A549 (cell line): ENCODE measurements at regions of chr21 and their contacts with region 1.

Region 1: DNA sequence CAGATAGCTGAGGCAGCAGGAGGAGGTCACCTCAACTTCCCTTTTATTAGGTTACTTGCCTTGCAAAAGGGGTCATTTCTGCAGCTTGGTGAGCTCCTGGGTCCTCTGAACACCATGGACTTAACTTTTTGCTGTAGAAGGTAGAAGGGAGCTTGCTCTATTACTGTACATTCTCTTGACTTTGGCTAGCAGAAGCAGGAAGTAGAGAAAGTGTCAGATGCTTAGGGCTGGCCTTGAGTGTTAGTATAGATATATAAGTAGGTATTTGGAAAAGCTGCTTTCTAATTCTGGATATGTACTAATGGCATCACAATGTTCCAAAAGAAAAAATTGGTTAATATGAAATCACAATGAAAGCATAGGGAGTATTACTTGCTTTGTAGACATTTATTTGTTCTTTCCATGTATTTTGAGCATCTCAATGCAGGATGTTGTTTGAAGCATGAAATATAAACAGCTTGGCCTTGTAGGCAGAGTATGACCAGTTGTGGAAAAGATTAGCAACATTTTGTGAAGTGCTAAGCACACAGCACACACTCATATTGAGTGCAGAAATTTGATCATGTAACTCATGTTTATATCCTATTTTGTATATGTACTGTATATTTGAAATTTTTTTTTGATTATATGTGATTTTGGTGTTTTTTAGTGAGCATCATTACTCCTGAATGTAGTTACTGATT is 108.8 kb downstream of the DYRK1A start:
- DNase-seq: no peak
- ATAC-seq: no peak
- H3K4me3 ChIP-seq: no peak overlapping the region
- H3K27ac ChIP-seq: no peak overlapping the region
- H3K4me1 ChIP-seq: peaks cover 30% of the 10 kb centered on the region; the same call in 2 of the 3 replicates
- CTCF ChIP-seq: no peak
- EP300 ChIP-seq: no peak
- POLR2A ChIP-seq: no peak
- RAD21 ChIP-seq: no peak

Region 2: DNA sequence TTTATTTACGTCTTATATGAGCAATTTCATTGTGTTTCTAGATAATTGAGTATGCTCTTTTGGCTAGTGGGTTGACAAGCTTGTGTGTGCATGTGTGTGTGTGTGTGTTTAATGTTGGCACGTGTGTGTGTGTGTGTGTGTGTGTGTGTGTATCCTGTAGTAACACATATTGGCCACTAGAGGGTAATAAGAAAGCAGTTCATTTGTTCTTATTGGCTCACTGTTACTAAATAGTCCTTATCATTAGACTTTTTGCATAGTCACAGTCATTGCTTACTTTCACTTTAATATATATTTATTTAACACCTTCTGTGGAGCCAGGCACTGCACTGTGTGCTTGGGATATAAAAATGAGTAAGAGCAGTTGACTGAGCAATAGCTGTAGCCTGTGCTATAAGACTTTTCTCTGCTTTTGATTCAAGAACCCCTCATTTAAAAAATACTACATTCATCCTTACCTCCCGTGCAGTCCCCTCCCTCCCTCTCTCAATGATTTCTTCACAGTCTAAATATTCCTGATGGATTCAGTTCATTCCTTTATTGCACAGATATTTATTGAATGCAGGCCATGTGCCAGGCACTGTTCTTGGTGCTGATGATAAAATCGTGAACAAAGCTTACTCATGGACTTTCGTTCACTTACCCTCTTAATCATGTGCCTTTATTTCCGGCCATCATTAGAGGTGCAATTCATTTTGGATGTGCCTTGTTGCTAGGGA is 12.1 kb before region 1 on chr21:
- CTCF ChIA-PET with region 1: interaction called, 15 read pairs
- POLR2A ChIA-PET with region 1: no interaction called
- DNase-seq: peak; percentile 17 to 64
- ATAC-seq: peak; percentile 54 to 72; a peak in 4 of 6 replicates
- H3K4me3 ChIP-seq: no peak overlapping the region
- H3K27ac ChIP-seq: peak overlapping the region; percentile 46 to 56; a peak in 5 of 6 replicates
- H3K4me1 ChIP-seq: peaks cover 48% of the 10 kb centered on the region
- CTCF ChIP-seq: peak; percentile 44
- EP300 ChIP-seq: no peak
- POLR2A ChIP-seq: no peak
- RAD21 ChIP-seq: peak in 1 of 2 experiments; percentile 35; a peak in 4 of 5 replicates

Region 3: DNA sequence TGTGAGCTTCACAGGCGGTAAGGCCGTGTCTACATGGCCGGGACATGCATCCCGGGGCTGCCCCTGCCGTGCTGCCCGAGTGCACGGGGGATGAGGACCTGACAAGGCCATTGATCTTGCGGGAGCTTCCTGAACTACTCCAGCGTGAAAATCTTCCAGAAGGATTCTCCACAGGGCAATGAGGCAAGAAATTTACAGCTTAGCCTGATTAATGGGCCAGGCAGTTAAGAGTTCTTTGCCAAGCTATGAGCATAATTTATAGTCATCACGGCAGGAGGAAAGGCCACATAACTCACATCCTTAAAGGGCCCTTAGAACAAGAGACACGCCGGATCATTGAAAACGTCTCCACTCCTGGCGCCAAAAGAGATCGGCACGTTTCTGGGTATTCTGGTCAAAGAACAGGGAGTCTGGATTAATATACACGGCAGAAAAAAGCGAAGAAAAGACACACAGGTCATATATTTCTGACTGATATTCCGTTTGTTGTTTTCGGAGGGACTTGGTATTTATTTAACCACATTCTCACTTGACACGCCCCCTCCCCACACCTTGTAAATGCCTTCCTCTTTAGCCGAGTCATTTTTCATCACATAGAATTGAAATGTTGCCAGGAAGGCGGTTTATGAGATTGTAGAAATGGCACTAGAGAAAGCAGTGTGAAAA is 71.8 kb after region 1 on chr21:
- CTCF ChIA-PET with region 1: no interaction called
- POLR2A ChIA-PET with region 1: no interaction called
- DNase-seq: no peak
- ATAC-seq: no peak; a peak in 1 of 6 replicates
- H3K4me3 ChIP-seq: no peak overlapping the region
- H3K27ac ChIP-seq: no peak overlapping the region
- H3K4me1 ChIP-seq: peaks cover 6% of the 10 kb centered on the region
- CTCF ChIP-seq: no peak
- EP300 ChIP-seq: no peak
- POLR2A ChIP-seq: no peak
- RAD21 ChIP-seq: no peak

Region 4: DNA sequence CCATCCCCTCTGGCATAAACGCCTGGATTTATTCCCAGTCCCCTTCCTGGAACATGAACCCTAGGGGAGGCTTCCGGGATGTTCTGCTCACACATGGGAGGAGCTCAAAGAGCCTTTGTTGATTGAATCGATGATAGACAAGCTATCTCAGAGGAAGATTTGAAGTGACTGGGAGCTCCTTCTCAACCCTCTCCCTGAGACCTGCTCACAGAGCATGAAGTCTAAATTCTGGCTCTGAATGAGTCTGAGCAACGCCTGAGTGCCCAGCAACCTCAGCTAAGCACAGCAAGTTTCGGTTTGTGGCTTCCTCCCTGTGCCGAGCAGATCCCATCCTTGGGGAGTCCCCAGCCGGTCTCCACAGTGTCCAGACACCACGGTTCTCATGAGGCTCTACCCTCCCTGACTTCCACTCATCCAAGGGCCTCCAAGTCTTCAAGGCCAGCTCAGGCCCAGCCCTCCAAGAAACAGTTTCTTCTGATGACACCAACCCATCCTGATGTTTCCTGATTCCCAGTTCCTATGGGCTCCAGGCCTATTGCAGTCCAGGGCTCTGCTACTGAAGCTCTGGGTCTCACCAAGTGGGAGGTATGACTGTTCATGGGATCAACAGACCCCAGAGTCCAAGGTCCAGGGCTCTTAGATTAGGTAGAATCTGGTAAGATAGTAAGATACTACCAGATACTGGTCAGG is 82.1 kb after region 1 on chr21:
- CTCF ChIA-PET with region 1: no interaction called
- POLR2A ChIA-PET with region 1: no interaction called
- DNase-seq: no peak
- ATAC-seq: 0 out of 6 replicates have a peak, but pooled peaks of 1 of the 2 experiments have one; percentile 19
- H3K4me3 ChIP-seq: no peak overlapping the region
- H3K27ac ChIP-seq: no peak overlapping the region
- H3K4me1 ChIP-seq: no peaks in the 10 kb centered on the region
- CTCF ChIP-seq: no peak
- EP300 ChIP-seq: no peak
- POLR2A ChIP-seq: no peak
- RAD21 ChIP-seq: no peak

Region 5: DNA sequence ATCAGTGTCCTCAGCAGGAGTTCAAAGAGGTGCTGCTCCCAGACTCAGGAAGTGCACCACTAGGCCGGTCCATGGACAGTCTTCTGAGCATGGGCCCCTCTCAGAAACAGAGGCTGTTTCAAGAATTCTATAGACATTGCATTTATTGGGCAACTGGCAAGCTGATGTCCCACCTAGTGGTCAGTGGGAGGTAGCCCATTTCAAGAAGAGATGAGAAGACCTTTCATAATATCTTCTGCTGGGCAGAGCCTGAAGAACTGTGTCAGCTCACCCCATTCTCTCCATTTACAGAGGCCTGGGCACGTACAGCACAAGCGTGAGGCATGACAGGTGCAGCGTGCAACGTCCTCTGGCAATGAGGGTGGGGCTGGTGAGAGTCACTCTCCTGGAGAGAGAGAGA is 107.3 kb after region 1 on chr21:
- CTCF ChIA-PET with region 1: no interaction called
- POLR2A ChIA-PET with region 1: no interaction called
- DNase-seq: peak; percentile 33 to 62
- ATAC-seq: peak; percentile 85 to 92
- H3K4me3 ChIP-seq: no peak overlapping the region
- H3K27ac ChIP-seq: no peak overlapping the region
- H3K4me1 ChIP-seq: no peaks in the 10 kb centered on the region
- CTCF ChIP-seq: peak; percentile 36; the same call in 2 of the 3 replicates
- EP300 ChIP-seq: no peak
- POLR2A ChIP-seq: no peak
- RAD21 ChIP-seq: peak; percentile 59 to 68